Colonic mucosa (tissue), 4 donors: ENCODE measurements at regions of chr2 and their contacts with region 1.

Region 1: GRCh38 chr2:102251042-102251848 is 60.1 kb upstream of the IL1RL1 start:
- DNase-seq: peak; percentile 81
- H3K4me3 ChIP-seq: peak overlapping the region; percentile 40
- H3K27ac ChIP-seq: no peak overlapping the region
- H3K4me1 ChIP-seq: no peaks in the 10 kb centered on the region
- H3K27me3 ChIP-seq: no peaks in the 10 kb centered on the region
- CTCF ChIP-seq: peak; percentile 74

Region 2: DNA sequence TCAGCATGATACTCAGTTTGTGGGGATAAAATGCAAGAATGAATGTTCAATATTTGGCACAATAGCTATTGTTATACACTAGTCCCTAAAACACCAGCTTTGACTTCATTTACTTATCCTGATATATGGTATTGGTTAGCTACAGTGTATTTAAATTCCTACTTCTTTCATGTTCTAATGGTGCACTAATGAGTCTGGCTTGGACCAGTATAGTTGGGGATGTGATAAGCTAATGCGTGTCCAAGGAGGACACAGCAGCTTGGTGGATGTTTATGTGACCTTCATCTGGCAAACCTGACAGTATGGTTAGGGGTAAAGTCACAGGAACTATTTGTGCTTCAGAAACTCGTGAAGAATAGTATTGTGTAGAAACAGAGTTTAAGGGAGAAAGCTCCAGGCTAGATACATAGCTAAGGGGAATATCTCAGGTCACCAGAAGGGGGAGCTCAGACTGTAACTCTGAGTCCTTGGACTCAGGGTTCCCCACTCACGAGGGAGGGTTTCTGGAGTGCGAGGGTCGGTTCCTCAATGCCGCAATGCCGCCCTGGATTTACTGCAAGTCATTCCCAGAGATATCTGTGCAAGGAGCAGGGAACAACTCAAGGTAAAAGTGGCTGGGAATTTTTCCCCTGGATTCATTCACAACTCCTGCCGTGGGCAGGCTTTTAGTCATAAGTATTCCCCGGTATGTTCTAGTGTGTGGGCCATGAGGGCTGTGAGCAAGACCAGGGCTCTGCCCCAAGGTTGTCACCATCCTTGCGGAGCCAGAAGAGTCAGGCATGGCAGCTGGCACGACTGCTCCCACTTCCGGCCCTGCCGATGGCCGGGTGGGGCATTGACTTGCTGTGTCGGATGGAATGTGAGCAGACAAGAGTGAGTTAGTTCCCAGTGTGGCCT is 245.0 kb before region 1 on chr2:
- intact Hi-C with region 1: no loop called
- DNase-seq: peak; percentile 67
- H3K4me3 ChIP-seq: no peak overlapping the region
- H3K27ac ChIP-seq: no peak overlapping the region
- H3K4me1 ChIP-seq: no peaks in the 10 kb centered on the region
- H3K27me3 ChIP-seq: no peaks in the 10 kb centered on the region
- CTCF ChIP-seq: peak; percentile 67

Region 3: DNA sequence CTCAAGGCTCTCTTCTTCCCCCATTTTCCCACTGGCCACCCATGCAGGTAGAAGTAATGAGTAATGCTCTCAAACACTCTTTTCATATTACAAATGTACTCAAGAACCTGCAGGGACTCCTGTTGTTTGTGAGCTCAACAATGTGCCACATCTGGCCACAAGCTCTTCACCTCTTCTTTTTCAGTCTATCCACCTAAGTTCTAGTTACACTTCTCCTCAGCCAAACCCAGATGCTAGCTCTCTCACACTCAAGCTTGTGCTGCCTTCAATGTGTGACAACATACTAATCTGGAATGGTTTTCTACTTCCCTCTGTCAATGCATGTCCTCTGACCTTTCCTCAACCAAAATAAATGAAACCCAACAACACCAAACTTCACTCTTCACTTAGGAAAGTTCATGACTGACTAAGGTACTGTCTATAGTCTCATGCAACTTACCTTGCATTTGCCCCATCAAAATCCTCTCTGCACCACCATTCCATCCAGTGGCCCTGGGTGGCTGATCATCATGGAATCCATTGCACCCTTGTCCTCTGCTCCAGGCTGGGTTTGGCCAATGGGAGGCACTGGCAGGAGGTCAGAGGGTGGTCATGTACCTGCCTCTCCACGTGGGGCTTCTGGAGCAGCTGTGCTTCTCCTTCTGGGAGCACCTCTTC is 99.0 kb after region 1 on chr2:
- intact Hi-C with region 1: loop called (anchors 5 kb)
- DNase-seq: no peak
- H3K4me3 ChIP-seq: no peak overlapping the region
- H3K27ac ChIP-seq: no peak overlapping the region
- H3K4me1 ChIP-seq: peaks cover 1% of the 10 kb centered on the region
- H3K27me3 ChIP-seq: no peaks in the 10 kb centered on the region
- CTCF ChIP-seq: no peak

Region 4: DNA sequence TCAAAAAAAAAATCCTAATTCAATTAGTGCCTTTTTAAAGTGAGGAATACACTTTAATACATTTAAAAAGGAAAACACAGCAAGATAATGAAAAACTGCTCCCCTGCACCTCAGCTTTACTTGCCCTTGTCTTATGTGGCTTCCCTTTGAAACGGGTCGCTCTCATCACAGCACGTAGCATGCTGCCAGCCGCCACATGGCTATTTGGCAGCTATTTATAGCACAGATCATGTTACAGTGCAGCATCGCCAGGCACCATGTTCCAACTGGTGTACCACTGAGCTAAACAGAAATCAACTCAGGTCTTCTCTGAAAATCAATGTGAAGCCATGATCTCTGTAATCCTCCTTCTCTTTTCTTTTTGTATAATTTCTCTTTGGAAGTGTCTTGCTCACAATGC is 575.7 kb after region 1 on chr2:
- intact Hi-C with region 1: no loop called
- DNase-seq: no peak
- H3K4me3 ChIP-seq: no peak overlapping the region
- H3K27ac ChIP-seq: no peak overlapping the region
- H3K4me1 ChIP-seq: no peaks in the 10 kb centered on the region
- H3K27me3 ChIP-seq: no peaks in the 10 kb centered on the region
- CTCF ChIP-seq: no peak